CD8-positive, alpha-beta memory T cell (primary cell): ENCODE measurements at regions of chr14 and their contacts with region 1.

Region 1: DNA sequence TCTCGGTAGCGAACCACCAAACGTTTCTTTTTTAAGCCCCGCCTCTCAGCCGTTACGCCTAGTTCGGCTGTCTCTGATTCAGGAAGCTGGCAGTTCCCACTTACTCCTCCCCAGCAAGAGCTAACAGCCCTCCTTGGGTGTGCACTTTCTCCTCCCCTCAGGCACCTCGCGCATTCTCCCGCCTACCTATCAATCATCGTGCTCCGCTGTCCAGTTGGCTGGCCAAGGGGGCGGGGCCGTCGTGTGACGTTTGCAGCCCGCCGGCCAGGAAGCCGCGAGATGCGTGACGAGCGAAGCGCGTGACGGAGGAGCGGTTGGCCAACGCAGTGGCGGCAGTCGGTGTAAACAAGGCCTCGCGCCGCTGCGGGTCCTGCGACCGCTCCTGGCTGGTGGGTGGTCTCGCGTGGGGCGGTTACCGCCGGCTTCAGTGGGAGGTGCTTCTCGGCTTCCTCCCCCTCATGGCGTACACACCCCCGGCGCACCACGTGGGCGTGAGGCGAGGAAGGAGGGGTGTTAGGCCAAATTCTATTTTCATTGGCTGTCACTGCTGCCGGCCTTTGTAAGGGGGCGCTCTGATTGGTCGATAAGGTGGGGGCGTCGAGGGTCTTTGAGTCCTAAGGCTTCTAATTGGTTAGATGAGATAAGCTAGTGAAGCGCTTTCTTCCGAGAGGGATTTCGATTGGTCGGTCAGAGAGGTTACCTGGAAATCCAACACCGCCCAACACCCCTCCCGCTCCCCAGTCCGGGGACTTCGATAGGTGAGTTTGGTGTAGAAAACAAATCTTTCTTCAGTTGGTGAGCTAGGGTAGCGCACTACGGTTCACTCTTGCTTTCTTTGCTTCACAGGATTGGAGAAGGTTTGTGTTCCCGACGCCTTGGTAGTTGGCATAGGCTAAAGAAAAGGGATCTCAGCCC is at the starts of genes DCAF11 and NRL:
- DNase-seq: peak; percentile 97 to 100 (median 99)
- H3K4me3 ChIP-seq: peak within 1 kb of the TSS; percentile 99
- H3K4me3 Mint-ChIP-seq: peak within 1 kb of the TSS; percentile 96 to 100 (median 98)
- H3K27ac ChIP-seq: peak within 1 kb of the TSS; percentile 98
- H3K27ac Mint-ChIP-seq: peak within 1 kb of the TSS; percentile 98 to 100 (median 99)
- H3K4me1 ChIP-seq: peaks cover 28% of the 10 kb centered on the region
- H3K4me1 Mint-ChIP-seq: peaks cover 30 to 37% (median 36%) of the 10 kb centered on the region in 3 donors
- H3K27me3 ChIP-seq: no peaks in the 10 kb centered on the region
- H3K27me3 Mint-ChIP-seq: peaks cover 0 to 5% of the 10 kb centered on the region in 2 donors
- total RNA-seq, gene DCAF11: 69.0 to 72.4 TPM
- total RNA-seq, gene NRL: 1.5 to 1.6 TPM

Region 2: DNA sequence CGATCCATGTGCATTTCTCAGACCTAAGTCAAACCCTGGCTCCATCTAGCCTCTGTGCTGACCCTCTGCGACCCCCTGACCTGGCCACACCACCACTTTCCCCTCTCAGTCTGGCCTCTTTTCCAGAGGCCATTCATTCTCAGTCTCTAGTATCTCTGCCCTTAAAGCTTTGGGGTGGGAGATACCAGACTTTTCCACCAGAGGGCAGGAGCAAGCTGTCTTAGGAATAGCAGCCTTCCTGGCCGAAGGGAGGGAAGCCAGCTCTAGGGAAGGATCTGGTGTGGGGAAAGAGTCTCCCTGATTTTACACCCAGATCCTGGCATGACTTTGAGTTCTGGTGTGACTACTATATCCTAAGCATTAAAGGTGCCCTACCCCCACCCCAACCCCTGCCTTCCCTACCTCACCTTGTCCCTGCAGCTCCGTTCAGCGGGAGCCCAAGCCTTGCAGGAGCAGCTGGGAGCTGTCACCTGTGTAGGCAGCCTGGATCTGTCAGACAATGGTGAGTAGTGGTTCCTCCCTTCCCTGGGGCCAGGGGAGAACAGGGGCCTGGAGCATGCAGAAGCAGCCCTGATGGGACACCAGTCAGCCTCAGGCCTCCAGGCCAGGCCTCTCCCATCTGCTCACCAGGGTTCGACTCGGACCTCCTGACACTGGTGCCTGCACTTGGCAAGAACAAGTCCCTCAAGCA is 56.4 kb before region 1 on chr14:
- CTCF ChIA-PET with region 1: interaction called, 114 read pairs
- POLR2A ChIA-PET with region 1: no interaction called
- DNase-seq: peak; percentile 43 to 67 (median 52)
- H3K4me3 ChIP-seq: no peak overlapping the region
- H3K4me3 Mint-ChIP-seq: peak overlapping the region in 1 of 7 donors; percentile 22
- H3K27ac ChIP-seq: no peak overlapping the region
- H3K27ac Mint-ChIP-seq: peak overlapping the region in 3 of 8 donors; percentile 65 to 86 (median 85)
- H3K4me1 ChIP-seq: no peaks in the 10 kb centered on the region
- H3K4me1 Mint-ChIP-seq: peaks cover 3 to 8% (median 4%) of the 10 kb centered on the region in 3 donors
- H3K27me3 ChIP-seq: no peaks in the 10 kb centered on the region
- H3K27me3 Mint-ChIP-seq: peaks cover 0 to 1% of the 10 kb centered on the region in 2 donors

Region 3: DNA sequence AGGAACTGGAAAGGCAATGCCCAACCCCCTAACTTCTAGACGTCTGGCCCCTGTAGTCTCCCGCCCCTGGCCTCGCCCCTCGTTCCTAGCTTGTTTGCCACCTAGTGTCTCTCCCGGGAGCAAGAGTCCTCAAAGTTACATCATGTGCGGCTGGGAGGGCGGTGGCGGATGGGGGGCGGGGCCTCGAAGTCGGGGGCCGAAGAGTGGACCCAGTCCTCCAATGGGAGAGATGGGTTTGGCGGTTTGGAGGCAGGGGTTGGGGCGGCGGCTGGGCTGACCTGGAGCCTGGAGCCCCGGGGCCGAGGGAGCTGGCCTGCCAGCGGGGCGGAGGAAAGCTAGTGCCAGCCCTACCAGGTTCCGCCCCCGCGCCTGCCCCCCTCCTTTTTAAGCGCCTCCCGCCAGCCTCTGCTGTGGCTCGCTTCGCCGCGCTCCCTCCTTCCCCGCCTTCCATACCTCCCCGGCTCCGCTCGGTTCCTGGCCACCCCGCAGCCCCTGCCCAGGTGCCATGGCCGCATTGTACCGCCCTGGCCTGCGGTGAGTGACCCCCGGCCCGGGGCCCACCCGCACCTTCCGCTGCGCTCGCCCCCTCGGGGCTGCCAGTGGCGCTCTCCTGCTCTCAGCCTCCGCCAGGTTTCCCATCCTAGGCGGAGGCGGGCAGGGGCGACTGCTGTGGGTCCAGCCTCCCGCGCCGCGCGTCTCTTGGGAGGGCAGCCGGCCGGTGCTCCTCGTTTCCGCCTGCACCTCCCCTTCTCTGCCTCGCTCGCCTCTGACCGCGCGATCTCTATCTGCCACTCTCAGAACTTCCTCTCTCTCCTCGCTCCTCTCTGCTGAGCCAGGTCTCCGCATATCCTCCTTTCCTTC is 20.7 kb before region 1 on chr14 and contains the start of gene PCK2:
- CTCF ChIA-PET with region 1: interaction called, 185 read pairs
- POLR2A ChIA-PET with region 1: interaction called, 29 read pairs
- DNase-seq: peak; percentile 63 to 77 (median 67)
- H3K4me3 ChIP-seq: peak within 1 kb of the TSS; percentile 93
- H3K4me3 Mint-ChIP-seq: peak within 1 kb of the TSS; percentile 93 to 99 (median 97)
- H3K27ac ChIP-seq: peak within 1 kb of the TSS; percentile 83
- H3K27ac Mint-ChIP-seq: peak within 1 kb of the TSS; percentile 65 to 98 (median 95)
- H3K4me1 ChIP-seq: peaks cover 16% of the 10 kb centered on the region
- H3K4me1 Mint-ChIP-seq: peaks cover 28 to 37% (median 37%) of the 10 kb centered on the region in 3 donors
- H3K27me3 ChIP-seq: no peaks in the 10 kb centered on the region
- H3K27me3 Mint-ChIP-seq: no peaks in the 10 kb centered on the region
- total RNA-seq, gene PCK2: 79.6 to 88.3 TPM

Region 4: GRCh38 chr14:24141097-24141880 is 26.5 kb after region 1 on chr14 and contains the start of gene EMC9:
- CTCF ChIA-PET with region 1: interaction called, 28 read pairs
- POLR2A ChIA-PET with region 1: interaction called, 58 read pairs
- DNase-seq: peak; percentile 98 to 100 (median 99)
- H3K4me3 ChIP-seq: peak within 1 kb of the TSS; percentile 85
- H3K4me3 Mint-ChIP-seq: peak within 1 kb of the TSS; percentile 87 to 98 (median 91)
- H3K27ac ChIP-seq: peak within 1 kb of the TSS; percentile 68
- H3K27ac Mint-ChIP-seq: peak within 1 kb of the TSS; percentile 80 to 98 (median 90)
- H3K4me1 ChIP-seq: peaks cover 56% of the 10 kb centered on the region
- H3K4me1 Mint-ChIP-seq: peaks cover 65 to 86% (median 79%) of the 10 kb centered on the region in 3 donors
- H3K27me3 ChIP-seq: no peaks in the 10 kb centered on the region
- H3K27me3 Mint-ChIP-seq: no peaks in the 10 kb centered on the region
- total RNA-seq, gene EMC9: 28.1 to 30.2 TPM

Region 5: GRCh38 chr14:24171422-24172260 is 56.8 kb after region 1 on chr14 and contains the start of gene REC8:
- CTCF ChIA-PET with region 1: no interaction called
- POLR2A ChIA-PET with region 1: no interaction called
- DNase-seq: peak; percentile 67 to 89 (median 80)
- H3K4me3 ChIP-seq: peak within 1 kb of the TSS; percentile 48
- H3K4me3 Mint-ChIP-seq: peak within 1 kb of the TSS; percentile 81 to 91 (median 90)
- H3K27ac ChIP-seq: no peak within 1 kb of the TSS
- H3K27ac Mint-ChIP-seq: peak within 1 kb of the TSS; percentile 88 to 96 (median 93)
- H3K4me1 ChIP-seq: no peaks in the 10 kb centered on the region
- H3K4me1 Mint-ChIP-seq: peaks cover 33 to 48% (median 47%) of the 10 kb centered on the region in 3 donors
- H3K27me3 ChIP-seq: no peaks in the 10 kb centered on the region
- H3K27me3 Mint-ChIP-seq: peaks cover 0 to 2% of the 10 kb centered on the region in 2 donors
- total RNA-seq, gene REC8: 24.5 to 26.7 TPM

Region 6: GRCh38 chr14:24195191-24196070 is 80.6 kb after region 1 on chr14 and contains the start of gene TM9SF1:
- CTCF ChIA-PET with region 1: no interaction called
- POLR2A ChIA-PET with region 1: interaction called, 13 read pairs
- DNase-seq: peak; percentile 89 to 98 (median 91)
- H3K4me3 ChIP-seq: peak within 1 kb of the TSS; percentile 91
- H3K4me3 Mint-ChIP-seq: peak within 1 kb of the TSS; percentile 83 to 96 (median 94)
- H3K27ac ChIP-seq: peak within 1 kb of the TSS; percentile 100
- H3K27ac Mint-ChIP-seq: peak within 1 kb of the TSS; percentile 96 to 100 (median 99)
- H3K4me1 ChIP-seq: peaks cover 32% of the 10 kb centered on the region
- H3K4me1 Mint-ChIP-seq: peaks cover 37 to 76% (median 56%) of the 10 kb centered on the region in 3 donors
- H3K27me3 ChIP-seq: no peaks in the 10 kb centered on the region
- H3K27me3 Mint-ChIP-seq: peaks cover 0 to 1% of the 10 kb centered on the region in 2 donors
- total RNA-seq, gene TM9SF1: 31.3 to 34.0 TPM

Region 7: GRCh38 chr14:24310646-24311604 is 196.1 kb after region 1 on chr14 and contains the start of gene LTB4R:
- CTCF ChIA-PET with region 1: interaction called, 12 read pairs
- POLR2A ChIA-PET with region 1: interaction called, 4 read pairs
- DNase-seq: peak; percentile 56 to 82 (median 74)
- H3K4me3 ChIP-seq: peak within 1 kb of the TSS; percentile 58
- H3K4me3 Mint-ChIP-seq: peak within 1 kb of the TSS; percentile 79 to 89 (median 86)
- H3K27ac ChIP-seq: peak within 1 kb of the TSS; percentile 69
- H3K27ac Mint-ChIP-seq: peak within 1 kb of the TSS; percentile 89 to 99 (median 96)
- H3K4me1 ChIP-seq: peaks cover 66% of the 10 kb centered on the region
- H3K4me1 Mint-ChIP-seq: peaks cover 68 to 77% (median 71%) of the 10 kb centered on the region in 3 donors
- H3K27me3 ChIP-seq: no peaks in the 10 kb centered on the region
- H3K27me3 Mint-ChIP-seq: peaks cover 0 to 2% of the 10 kb centered on the region in 2 donors
- total RNA-seq, gene LTB4R: 9.8 to 12.3 TPM

Region 8: DNA sequence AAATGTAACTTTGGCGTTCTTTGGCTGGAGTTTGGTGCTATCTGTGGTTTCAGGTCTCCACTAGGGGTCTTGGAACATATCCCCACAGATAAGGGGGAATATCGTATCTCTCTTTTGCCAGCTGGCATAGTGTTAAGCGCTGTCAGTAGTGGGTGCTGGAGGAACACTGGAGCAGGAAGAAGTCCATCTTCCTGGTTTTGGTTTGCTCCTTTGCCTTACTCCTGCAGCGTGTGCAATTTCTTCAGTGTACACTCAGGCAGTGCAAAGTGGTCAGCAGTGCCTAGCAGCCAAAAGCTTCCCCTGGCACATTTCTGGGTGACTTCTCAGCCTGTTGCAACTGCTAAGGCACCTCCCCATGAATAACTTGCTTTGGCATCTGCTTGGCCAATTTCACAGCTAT is 236.7 kb after region 1 on chr14:
- CTCF ChIA-PET with region 1: no interaction called
- POLR2A ChIA-PET with region 1: no interaction called
- DNase-seq: no peak
- H3K4me3 ChIP-seq: no peak overlapping the region
- H3K4me3 Mint-ChIP-seq: no peak overlapping the region
- H3K27ac ChIP-seq: no peak overlapping the region
- H3K27ac Mint-ChIP-seq: no peak overlapping the region
- H3K4me1 ChIP-seq: no peaks in the 10 kb centered on the region
- H3K4me1 Mint-ChIP-seq: no peaks in the 10 kb centered on the region
- H3K27me3 ChIP-seq: peaks cover 3% of the 10 kb centered on the region
- H3K27me3 Mint-ChIP-seq: peaks cover 29 to 58% of the 10 kb centered on the region in 2 donors